Left ventricle myocardium inferior (tissue), 1 donor: ENCODE measurements at regions of chr4 and their contacts with region 1.

Region 1: GRCh38 chr4:102598086-102598761 is 97.1 kb downstream of the NFKB1 start:
- DNase-seq: no peak
- H3K4me3 ChIP-seq: no peak overlapping the region
- H3K27ac ChIP-seq: peak overlapping the region; percentile 28
- H3K4me1 ChIP-seq: peaks cover 23% of the 10 kb centered on the region
- H3K27me3 ChIP-seq: no peaks in the 10 kb centered on the region
- CTCF ChIP-seq: no peak

Region 2: GRCh38 chr4:102500696-102501446 is 97.4 kb before region 1 on chr4 and contains the start of gene NFKB1:
- intact Hi-C with region 1: loop called (anchors 10 kb)
- DNase-seq: peak; percentile 72
- H3K4me3 ChIP-seq: peak within 1 kb of the TSS; percentile 86
- H3K27ac ChIP-seq: peak within 1 kb of the TSS; percentile 98
- H3K4me1 ChIP-seq: peaks cover 57% of the 10 kb centered on the region
- H3K27me3 ChIP-seq: no peaks in the 10 kb centered on the region
- CTCF ChIP-seq: no peak
- total RNA-seq, gene NFKB1: 18.0 TPM

Region 3: DNA sequence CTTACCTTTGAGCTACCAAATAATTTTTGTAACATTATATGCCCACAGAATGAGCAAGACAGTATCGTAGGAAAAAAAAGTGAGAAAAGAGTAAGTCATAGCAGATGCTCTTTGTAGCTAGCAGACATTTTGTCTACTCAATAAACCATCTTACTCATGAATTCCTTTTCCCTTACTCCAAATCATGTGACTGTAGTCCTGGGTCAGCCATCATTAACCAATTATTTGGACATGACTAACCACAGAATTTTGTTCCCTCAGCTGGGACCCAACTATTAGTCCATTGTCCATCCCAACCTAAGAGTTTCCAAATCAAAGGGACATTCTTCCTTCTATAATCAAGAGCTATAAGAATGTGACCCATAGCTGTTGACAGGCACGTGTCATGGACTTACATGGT is 217.8 kb after region 1 on chr4:
- intact Hi-C with region 1: no loop called
- DNase-seq: no peak
- H3K4me3 ChIP-seq: no peak overlapping the region
- H3K27ac ChIP-seq: no peak overlapping the region
- H3K4me1 ChIP-seq: peaks cover 100% of the 10 kb centered on the region
- H3K27me3 ChIP-seq: no peaks in the 10 kb centered on the region
- CTCF ChIP-seq: no peak